PC-9 (cell line): ENCODE measurements at regions of chr2 and their contacts with region 1.

Region 1: DNA sequence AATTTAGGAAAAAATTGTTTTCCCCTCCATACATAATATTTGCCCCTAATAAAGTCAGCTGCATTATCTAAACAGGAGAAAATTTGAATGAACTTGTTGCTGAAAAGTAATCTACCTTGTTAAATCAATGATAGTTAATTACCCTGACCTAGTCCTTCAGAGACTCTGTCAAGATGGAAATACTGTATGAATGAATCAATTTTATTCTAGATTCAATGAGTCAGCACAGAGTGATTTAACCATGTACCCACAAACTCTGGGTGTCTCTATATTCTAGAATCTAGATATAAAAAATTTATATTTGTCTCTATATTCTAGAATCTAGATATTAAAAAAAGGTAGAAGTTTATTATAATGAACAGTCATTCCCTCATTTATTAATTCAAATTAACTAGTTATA is 36.2 kb downstream of the NDUFAF7 start:
- DNase-seq: no peak
- H3K4me3 ChIP-seq: no peak overlapping the region
- H3K27ac ChIP-seq: no peak overlapping the region; the same call in 1 of the 2 replicates
- H3K4me1 ChIP-seq: no peaks in the 10 kb centered on the region
- H3K27me3 ChIP-seq: no peaks in the 10 kb centered on the region
- CTCF ChIP-seq: no peak

Region 2: GRCh38 chr2:37306024-37306423 is 38.3 kb after region 1 on chr2:
- CTCF ChIA-PET with region 1: interaction called, 12 read pairs
- POLR2A ChIA-PET with region 1: no interaction called
- intact Hi-C with region 1: no loop called
- DNase-seq: no peak
- H3K4me3 ChIP-seq: no peak overlapping the region
- H3K27ac ChIP-seq: no peak overlapping the region
- H3K4me1 ChIP-seq: peaks cover 17% of the 10 kb centered on the region; the same call in 1 of the 2 replicates
- H3K27me3 ChIP-seq: no peaks in the 10 kb centered on the region
- CTCF ChIP-seq: no peak